H1 (cell line): ENCODE measurements at regions of chr15 and their contacts with region 1.

Region 1: DNA sequence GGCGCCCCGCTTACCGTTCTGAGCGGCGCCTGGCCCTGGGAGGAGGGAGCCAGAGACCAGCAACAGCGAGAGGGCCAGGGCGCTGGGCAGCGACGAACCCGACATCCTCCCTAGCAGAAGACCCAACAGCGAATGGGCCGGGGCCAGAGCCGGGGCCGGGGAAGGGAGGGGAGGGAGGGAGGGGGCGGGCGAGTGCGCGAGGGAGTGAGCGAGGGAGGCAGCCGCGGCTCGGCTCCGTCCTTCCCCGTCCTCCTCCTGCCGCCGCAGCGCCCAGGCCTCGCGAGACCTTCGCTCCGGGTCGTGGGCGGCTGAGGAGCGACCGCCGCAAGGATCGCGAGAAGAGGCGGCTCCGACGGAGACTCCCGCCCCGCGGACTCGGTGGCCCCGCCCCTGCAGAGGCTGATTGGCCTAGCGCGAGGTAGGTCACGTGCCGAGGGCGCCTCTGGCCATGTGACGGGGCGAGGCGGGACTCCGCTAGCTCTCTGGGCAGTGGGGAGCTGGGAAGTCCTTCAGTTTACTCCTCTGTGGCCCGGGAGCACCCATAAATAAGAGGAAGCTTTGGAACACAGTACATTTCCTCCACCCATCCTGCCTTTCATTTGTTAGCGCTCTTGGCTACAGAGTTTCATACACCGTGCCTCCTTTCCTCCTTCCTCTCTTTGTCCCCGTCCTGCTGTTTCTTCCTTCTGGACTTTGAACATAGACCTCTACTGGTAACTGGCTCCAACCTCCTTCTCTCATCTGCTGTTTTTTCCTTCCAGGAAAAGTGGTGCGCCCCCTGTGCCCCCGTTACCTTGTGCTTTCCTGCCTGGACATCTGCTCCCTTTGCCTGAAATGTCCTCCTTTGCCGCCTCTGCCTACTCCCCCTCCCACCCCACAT is at the start of gene NPTN:
- DNase-seq: peak; percentile 94 to 98
- H3K4me3 ChIP-seq: peak within 1 kb of the TSS; percentile 70 to 96 (median 87)
- H3K27ac ChIP-seq: peak within 1 kb of the TSS; percentile 52; the same call in 1 of the 2 replicates
- H3K4me1 ChIP-seq: peaks cover 0 to 13% (median 7%) of the 10 kb centered on the region in 4 experiments; a peak in 4 of 7 replicates
- H3K27me3 ChIP-seq: no peaks in the 10 kb centered on the region; a peak in 1 of 7 replicates
- CTCF ChIP-seq: peak in 1 of 3 experiments; percentile 6; a peak in 1 of 4 replicates
- EP300 ChIP-seq: no peak
- POLR2A ChIP-seq: peak; percentile 84 to 94
- RAD21 ChIP-seq: no peak
- total RNA-seq, gene NPTN: 113 TPM in 2 replicates

Region 2: GRCh38 chr15:73225358-73226015 is 407.9 kb before region 1 on chr15:
- CTCF ChIA-PET with region 1: no interaction called
- POLR2A ChIA-PET with region 1: no interaction called
- DNase-seq: peak in 1 of 2 experiments; percentile 51
- H3K4me3 ChIP-seq: no peak overlapping the region
- H3K27ac ChIP-seq: peak overlapping the region; percentile 13; the same call in 1 of the 2 replicates
- H3K4me1 ChIP-seq: peaks cover 0 to 6% (median 2%) of the 10 kb centered on the region in 4 experiments; a peak in 3 of 7 replicates
- H3K27me3 ChIP-seq: no peaks in the 10 kb centered on the region
- CTCF ChIP-seq: no peak
- EP300 ChIP-seq: no peak
- POLR2A ChIP-seq: no peak
- RAD21 ChIP-seq: no peak

Region 3: DNA sequence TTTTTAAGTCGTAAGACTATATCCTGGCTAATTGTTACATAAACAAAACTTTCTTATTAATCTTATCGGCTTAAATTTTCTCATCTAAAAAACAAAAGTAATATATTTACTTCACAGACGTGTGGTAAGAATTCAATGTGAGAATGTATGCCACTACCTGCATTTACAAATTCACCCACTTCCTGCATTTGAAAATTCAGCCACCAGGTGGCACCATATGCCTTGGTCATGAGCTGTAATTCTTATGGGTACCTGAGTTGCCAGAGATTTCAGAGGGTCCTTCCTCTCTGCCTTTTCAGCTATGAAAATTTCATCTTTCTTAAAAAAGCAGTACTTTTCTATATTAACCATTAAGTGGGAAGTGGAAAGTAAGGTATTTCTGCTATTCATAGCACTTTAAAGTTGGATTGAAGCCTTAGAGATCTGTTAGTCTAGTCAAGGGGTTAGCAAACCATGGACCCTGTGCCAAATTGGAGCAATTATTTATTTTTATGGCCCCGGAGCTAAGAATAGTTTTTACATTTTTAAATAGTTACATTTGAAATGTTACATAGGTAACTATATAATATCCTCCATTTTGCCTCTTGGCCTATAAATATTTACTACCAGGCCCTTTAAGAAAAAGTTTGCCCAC is 392.4 kb before region 1 on chr15:
- CTCF ChIA-PET with region 1: no interaction called
- POLR2A ChIA-PET with region 1: no interaction called
- DNase-seq: peak in 1 of 2 experiments; percentile 89
- H3K4me3 ChIP-seq: no peak overlapping the region
- H3K27ac ChIP-seq: no peak overlapping the region
- H3K4me1 ChIP-seq: no peaks in the 10 kb centered on the region
- H3K27me3 ChIP-seq: no peaks in the 10 kb centered on the region
- CTCF ChIP-seq: peak in 2 of 3 experiments; percentile 81 to 87; a peak in 3 of 4 replicates
- EP300 ChIP-seq: no peak
- POLR2A ChIP-seq: no peak
- RAD21 ChIP-seq: peak; percentile 66 to 74

Region 4: DNA sequence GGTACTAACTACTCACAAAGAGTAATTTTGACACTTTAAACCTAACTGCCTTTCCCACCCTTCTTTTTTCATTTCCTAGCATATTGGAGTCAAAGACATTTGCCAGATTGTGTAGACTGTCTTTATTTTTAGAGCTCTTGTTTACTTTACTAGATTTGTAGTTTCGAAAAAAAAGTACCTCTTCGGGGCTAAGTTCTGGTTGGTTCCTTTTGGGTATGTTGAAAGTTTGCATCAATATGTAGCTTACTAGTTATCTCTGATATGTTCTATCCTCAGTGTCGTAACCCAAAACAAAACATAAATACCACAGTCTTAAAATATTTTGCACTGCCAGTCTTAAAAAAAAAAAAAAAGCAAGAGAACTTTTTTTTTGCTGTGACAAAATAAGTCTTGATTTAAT is 138.2 kb before region 1 on chr15:
- CTCF ChIA-PET with region 1: no interaction called
- POLR2A ChIA-PET with region 1: no interaction called
- DNase-seq: no peak
- H3K4me3 ChIP-seq: no peak overlapping the region
- H3K27ac ChIP-seq: no peak overlapping the region
- H3K4me1 ChIP-seq: no peaks in the 10 kb centered on the region
- H3K27me3 ChIP-seq: no peaks in the 10 kb centered on the region
- CTCF ChIP-seq: no peak
- EP300 ChIP-seq: no peak
- POLR2A ChIP-seq: no peak
- RAD21 ChIP-seq: no peak

Region 5: DNA sequence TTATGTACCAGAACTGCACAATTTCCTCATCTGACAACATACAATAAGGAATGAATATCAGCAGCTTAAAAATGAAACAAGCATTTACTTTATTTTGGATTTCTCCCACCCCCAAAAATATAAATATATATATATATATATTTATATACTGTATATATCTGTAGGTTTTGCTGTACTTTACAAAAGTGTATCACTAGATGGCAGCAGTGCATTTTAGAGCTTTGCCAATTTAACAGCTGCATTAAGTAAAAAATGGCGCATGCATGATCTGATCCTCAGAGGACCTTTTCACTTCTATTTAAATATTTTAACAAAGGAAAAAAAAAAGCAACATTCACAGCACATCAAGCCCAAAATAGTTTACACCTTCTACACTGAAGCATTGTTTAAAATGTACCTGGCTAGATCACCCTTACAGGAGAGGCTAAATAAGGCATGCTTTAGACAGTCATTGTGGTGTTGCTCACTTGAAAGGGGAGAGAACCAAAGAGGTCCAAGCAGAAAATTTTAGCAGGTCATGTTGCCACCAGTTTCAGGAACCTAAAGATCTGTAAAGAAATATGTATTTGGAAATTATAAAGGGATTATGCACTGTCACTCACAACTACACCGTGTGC is 72.7 kb before region 1 on chr15:
- CTCF ChIA-PET with region 1: interaction called, 15 read pairs
- POLR2A ChIA-PET with region 1: no interaction called
- DNase-seq: no peak
- H3K4me3 ChIP-seq: no peak overlapping the region
- H3K27ac ChIP-seq: no peak overlapping the region
- H3K4me1 ChIP-seq: no peaks in the 10 kb centered on the region
- H3K27me3 ChIP-seq: no peaks in the 10 kb centered on the region
- CTCF ChIP-seq: peak in 1 of 3 experiments; percentile 44; a peak in 1 of 4 replicates
- EP300 ChIP-seq: no peak
- POLR2A ChIP-seq: no peak
- RAD21 ChIP-seq: peak; percentile 58 to 66

Region 6: GRCh38 chr15:73601451-73602445 is 31.6 kb before region 1 on chr15:
- CTCF ChIA-PET with region 1: interaction called, 26 read pairs
- POLR2A ChIA-PET with region 1: interaction called, 8 read pairs
- DNase-seq: no peak
- H3K4me3 ChIP-seq: peak overlapping the region in 3 of 4 experiments; percentile 1 to 22 (median 7); a peak in 3 of 8 replicates
- H3K27ac ChIP-seq: no peak overlapping the region
- H3K4me1 ChIP-seq: peaks cover 16 to 32% (median 27%) of the 10 kb centered on the region in 4 experiments
- H3K27me3 ChIP-seq: no peaks in the 10 kb centered on the region
- CTCF ChIP-seq: no peak
- EP300 ChIP-seq: no peak
- POLR2A ChIP-seq: no peak
- RAD21 ChIP-seq: no peak

Region 7: GRCh38 chr15:73617301-73617831 is 16.0 kb before region 1 on chr15:
- CTCF ChIA-PET with region 1: interaction called, 119 read pairs
- POLR2A ChIA-PET with region 1: interaction called, 115 read pairs
- DNase-seq: no peak
- H3K4me3 ChIP-seq: peak overlapping the region in 1 of 4 experiments; percentile 9; a peak in 1 of 8 replicates
- H3K27ac ChIP-seq: no peak overlapping the region; the same call in 1 of the 2 replicates
- H3K4me1 ChIP-seq: peaks cover 0 to 21% (median 9%) of the 10 kb centered on the region in 4 experiments; a peak in 5 of 7 replicates
- H3K27me3 ChIP-seq: no peaks in the 10 kb centered on the region
- CTCF ChIP-seq: no peak
- EP300 ChIP-seq: no peak
- POLR2A ChIP-seq: no peak
- RAD21 ChIP-seq: no peak

Region 8: GRCh38 chr15:73677146-73677607 is 43.8 kb after region 1 on chr15:
- CTCF ChIA-PET with region 1: interaction called, 72 read pairs
- POLR2A ChIA-PET with region 1: interaction called, 3 read pairs
- DNase-seq: peak in 1 of 2 experiments; percentile 85
- H3K4me3 ChIP-seq: no peak overlapping the region
- H3K27ac ChIP-seq: no peak overlapping the region
- H3K4me1 ChIP-seq: no peaks in the 10 kb centered on the region; a peak in 1 of 7 replicates
- H3K27me3 ChIP-seq: no peaks in the 10 kb centered on the region; a peak in 1 of 7 replicates
- CTCF ChIP-seq: peak; percentile 55 to 90 (median 88)
- EP300 ChIP-seq: no peak
- POLR2A ChIP-seq: no peak
- RAD21 ChIP-seq: peak; percentile 63 to 71

Region 9: DNA sequence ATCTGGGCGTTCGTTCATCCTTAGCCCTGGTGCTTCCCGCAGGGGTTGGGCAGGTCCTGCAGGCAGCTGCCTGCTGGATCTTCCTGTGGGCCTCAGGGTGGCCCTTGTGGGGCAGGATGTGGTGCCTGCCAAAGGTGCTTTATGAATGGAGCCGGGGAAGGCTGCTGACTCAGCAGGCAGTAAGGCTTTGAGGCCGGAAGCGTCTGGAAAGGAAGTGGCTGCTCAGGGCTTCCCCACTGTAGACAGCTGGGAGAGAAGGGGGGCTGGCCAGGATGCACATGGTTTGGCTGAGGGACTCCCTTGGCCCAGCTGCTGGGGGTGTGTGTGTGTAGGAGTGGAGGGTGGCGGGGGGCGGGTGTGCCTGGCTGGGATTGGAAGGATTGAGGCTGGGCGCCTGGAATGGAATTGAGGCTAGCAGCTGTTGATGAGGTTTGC is 63.7 kb after region 1 on chr15:
- CTCF ChIA-PET with region 1: interaction called, 448 read pairs
- POLR2A ChIA-PET with region 1: interaction called, 4 read pairs
- DNase-seq: no peak
- H3K4me3 ChIP-seq: no peak overlapping the region
- H3K27ac ChIP-seq: 0 out of 2 replicates have a peak overlapping the region, but pooled peaks have one; percentile 3
- H3K4me1 ChIP-seq: peaks cover 0 to 21% (median 9%) of the 10 kb centered on the region in 4 experiments; a peak in 6 of 7 replicates
- H3K27me3 ChIP-seq: no peaks in the 10 kb centered on the region
- CTCF ChIP-seq: no peak
- EP300 ChIP-seq: no peak
- POLR2A ChIP-seq: no peak
- RAD21 ChIP-seq: no peak

Region 10: GRCh38 chr15:73771380-73772045 is 138.2 kb after region 1 on chr15:
- CTCF ChIA-PET with region 1: interaction called, 10 read pairs
- POLR2A ChIA-PET with region 1: interaction called, 5 read pairs
- DNase-seq: no peak
- H3K4me3 ChIP-seq: no peak overlapping the region
- H3K27ac ChIP-seq: no peak overlapping the region
- H3K4me1 ChIP-seq: peaks cover 0 to 12% (median 3%) of the 10 kb centered on the region in 4 experiments; a peak in 3 of 7 replicates
- H3K27me3 ChIP-seq: no peaks in the 10 kb centered on the region
- CTCF ChIP-seq: peak; percentile 42 to 64 (median 52); a peak in 3 of 4 replicates
- EP300 ChIP-seq: no peak
- POLR2A ChIP-seq: no peak
- RAD21 ChIP-seq: peak; percentile 19 to 51; a peak in 2 of 4 replicates